Posterior vena cava (tissue), 2 donors: ENCODE measurements at regions of chr3 and their contacts with region 1.

Region 1: GRCh38 chr3:52154117-52155094 is at the start of gene POC1A:
- DNase-seq: peak; percentile 99
- total RNA-seq, gene POC1A: 1.7 to 1.9 TPM

Region 2: DNA sequence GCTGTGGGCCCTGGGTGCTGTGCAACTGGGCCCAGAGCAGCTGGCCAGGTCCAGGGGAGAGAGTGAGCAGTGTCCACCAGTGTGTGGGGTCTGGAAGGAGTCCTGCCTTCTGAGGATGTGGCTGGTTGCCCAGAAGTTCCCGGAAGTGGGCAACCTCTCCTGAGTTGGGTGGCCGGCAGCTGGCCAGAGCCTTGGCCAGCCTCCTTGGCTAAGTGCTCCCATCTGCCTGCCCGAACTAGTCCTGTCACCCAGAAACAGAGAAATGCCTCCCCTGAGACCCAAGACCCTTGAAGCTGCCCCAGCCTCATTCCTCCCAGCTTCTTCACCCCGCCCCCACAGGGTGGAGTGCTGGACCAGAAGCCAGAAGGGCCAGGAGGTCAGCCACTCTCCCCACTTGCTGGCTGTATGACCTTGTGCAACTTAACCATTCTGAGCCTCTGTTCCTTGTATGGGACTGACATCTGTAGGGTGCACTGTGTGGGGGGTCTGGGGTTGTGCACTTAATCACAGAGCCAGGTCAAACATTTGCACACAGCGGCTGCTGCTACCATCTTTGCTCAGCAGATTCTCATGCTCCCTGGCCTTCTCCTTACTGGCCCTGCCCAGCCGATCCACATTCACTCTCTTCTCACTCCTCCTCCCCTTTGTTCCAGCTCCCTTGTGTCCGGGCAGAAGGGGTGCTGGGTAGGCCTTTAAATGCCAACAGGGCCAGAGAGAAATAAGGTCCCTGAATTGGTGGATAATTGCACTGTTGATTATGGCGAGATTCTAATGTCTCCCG is 36.1 kb after region 1 on chr3:
- intact Hi-C with region 1: loop called in 1 of 2 experiments (anchors 5 kb)
- DNase-seq: peak; percentile 86